ENCODE measurements at regions of chr22 and their contacts with region 1.

Region 1: DNA sequence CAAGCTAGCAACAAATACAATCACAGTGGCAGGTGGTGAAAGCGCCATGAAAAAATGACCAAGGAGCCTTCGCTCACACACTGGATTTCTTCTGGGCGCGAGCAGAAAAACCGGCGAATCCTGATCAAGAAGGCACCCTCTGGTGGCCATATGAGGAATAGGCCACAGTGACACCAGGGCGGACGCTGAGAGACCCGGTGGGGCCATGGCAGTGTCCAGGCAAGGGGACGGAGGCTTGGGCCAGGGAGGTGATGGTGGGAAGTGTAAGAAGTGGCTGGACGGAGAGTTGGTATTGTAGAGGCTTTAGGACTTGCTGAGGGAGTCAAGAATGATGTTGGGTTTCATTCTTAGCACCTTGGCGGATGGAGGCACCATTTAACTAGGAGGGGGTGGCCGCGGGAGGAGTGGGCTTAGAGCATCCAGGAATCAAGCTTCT is 16.9 kb upstream of the RAC2 start:
- DNase-seq: peak in 1 of 2 experiments; percentile 67
- H3K4me3 ChIP-seq: no peak overlapping the region
- H3K27ac ChIP-seq: no peak overlapping the region
- H3K4me1 ChIP-seq: peaks cover 19% of the 10 kb centered on the region; the same call in 1 of the 2 replicates
- H3K27me3 ChIP-seq: no peaks in the 10 kb centered on the region
- CTCF ChIP-seq: peak; percentile 98

Region 2: DNA sequence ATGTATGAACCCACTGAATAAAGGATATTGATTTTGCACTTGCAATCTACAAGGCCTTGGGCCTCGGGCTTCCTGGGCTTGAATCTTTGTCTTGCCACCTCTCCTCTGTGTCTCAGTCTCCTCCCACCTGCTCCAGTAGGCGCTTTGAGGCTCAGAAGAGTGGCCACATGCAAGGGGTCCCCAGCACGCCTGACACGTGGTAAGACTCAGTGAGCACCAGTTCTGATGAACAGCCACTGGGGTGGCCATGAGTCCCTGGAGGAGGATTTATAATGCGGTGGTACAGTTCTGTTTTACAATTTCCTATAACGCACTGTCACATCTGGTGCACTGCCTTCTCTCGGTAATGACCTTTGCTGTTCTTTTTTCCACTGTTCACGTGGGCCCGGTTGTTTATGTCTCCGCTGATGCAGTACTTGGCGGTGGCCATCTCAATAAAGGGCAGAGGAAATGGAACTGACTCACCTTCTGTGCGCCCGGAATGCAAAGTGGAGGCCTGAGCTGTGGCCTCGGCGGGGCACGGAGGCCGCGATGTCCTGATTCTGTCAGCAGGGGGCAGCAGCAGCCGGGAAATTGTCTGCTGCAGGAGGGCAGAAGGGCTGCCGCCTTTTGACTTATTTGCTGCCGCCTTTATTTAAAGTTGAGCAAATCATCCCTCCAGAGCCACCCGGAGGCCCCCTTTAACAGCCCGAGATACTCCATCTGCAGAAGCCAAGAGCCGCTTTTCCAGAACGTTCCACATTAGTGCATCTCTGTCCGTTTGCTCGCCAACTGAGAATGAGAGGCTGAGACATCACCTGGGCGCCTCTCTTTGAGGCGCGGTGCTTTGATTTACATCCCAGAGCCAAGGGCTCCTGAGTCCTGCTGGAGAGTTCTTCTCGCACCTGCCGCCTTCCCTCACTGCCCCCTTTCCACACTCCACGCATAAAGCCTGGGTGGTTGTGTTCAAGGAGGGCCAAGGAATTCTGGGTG is 479.0 kb before region 1 on chr22:
- CTCF ChIA-PET with region 1: no interaction called
- POLR2A ChIA-PET with region 1: no interaction called
- intact Hi-C with region 1: loop called (anchors 2 kb)
- DNase-seq: peak; percentile 80 to 93
- H3K4me3 ChIP-seq: no peak overlapping the region
- H3K27ac ChIP-seq: no peak overlapping the region
- H3K4me1 ChIP-seq: peaks cover 5% of the 10 kb centered on the region
- H3K27me3 ChIP-seq: peaks cover 9% of the 10 kb centered on the region
- CTCF ChIP-seq: peak; percentile 99

Region 3: GRCh38 chr22:37043828-37044538 is 216.9 kb before region 1 on chr22:
- CTCF ChIA-PET with region 1: interaction called, 3 read pairs
- POLR2A ChIA-PET with region 1: no interaction called
- intact Hi-C with region 1: loop called (anchors 10 kb)
- DNase-seq: peak; percentile 74 to 80
- H3K4me3 ChIP-seq: no peak overlapping the region
- H3K27ac ChIP-seq: no peak overlapping the region
- H3K4me1 ChIP-seq: peaks cover 38% of the 10 kb centered on the region
- H3K27me3 ChIP-seq: no peaks in the 10 kb centered on the region
- CTCF ChIP-seq: peak; percentile 93

Region 4: DNA sequence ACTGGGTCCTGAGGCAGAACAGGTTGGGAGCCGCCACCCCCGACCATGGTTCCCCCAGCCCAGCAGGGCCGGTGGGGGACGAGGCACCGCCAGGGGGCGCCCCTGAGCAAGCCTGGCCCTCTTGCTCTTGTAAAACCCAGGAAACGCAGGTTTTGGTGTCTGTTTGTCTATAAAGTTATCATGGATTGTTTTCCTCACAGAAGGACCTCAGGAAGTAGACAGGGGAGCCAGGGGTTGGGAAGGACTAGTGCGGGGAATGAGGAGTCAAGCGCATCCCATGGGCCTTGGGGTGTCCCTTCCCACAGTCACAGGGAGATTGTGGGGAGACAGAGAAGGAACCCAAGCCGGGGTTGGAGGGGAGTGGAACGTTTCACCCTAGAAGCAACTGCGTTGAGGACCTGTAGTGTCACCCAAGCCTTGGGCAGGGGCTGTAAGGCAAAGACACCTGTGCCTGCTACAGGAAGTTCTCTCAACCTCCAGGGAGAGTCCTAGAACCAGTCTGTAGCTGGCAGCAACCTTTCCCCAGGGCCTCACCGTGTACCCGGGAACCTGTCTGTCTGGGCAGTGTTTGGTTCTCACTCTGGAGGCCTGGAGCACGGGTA is 182.9 kb before region 1 on chr22:
- CTCF ChIA-PET with region 1: no interaction called
- POLR2A ChIA-PET with region 1: no interaction called
- intact Hi-C with region 1: loop called (anchors 5 kb)
- DNase-seq: peak in 1 of 2 experiments; percentile 74
- H3K4me3 ChIP-seq: no peak overlapping the region
- H3K27ac ChIP-seq: no peak overlapping the region
- H3K4me1 ChIP-seq: no peaks in the 10 kb centered on the region
- H3K27me3 ChIP-seq: peaks cover 43% of the 10 kb centered on the region
- CTCF ChIP-seq: peak; percentile 100

Region 5: DNA sequence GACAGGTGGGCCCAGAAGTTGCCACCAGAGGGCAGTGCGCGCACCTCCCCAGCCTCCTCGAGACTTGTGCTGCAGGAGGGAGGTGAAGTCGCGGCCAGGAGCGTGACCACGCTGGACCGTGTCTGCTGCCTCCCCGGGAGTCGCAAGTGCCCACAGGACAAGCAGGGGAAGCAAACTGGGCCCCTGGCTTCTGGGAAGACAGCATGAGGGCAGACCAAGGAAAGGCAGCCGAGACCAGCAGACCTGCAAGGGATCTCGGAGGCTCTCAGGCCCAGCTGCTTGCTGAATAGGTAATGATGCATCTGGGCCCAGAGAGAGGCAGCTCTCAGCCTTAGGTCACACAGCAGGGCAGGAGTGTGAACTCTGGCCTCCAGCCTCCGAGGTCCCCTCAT is 94.2 kb before region 1 on chr22:
- CTCF ChIA-PET with region 1: no interaction called
- POLR2A ChIA-PET with region 1: no interaction called
- intact Hi-C with region 1: loop called (anchors 2 kb)
- DNase-seq: peak; percentile 73 to 86
- H3K4me3 ChIP-seq: peak overlapping the region; percentile 12; the same call in 1 of the 2 replicates
- H3K27ac ChIP-seq: no peak overlapping the region
- H3K4me1 ChIP-seq: peaks cover 9% of the 10 kb centered on the region; the same call in 1 of the 2 replicates
- H3K27me3 ChIP-seq: no peaks in the 10 kb centered on the region
- CTCF ChIP-seq: peak; percentile 96